IMR-90 (cell line): ENCODE measurements at regions of chr19 and their contacts with region 1.

Region 1: GRCh38 chr19:29367791-29368222 is 154.9 kb upstream of the UQCRFS1 start:
- DNase-seq: no peak
- ATAC-seq: no peak
- H3K4me3 ChIP-seq: no peak overlapping the region
- H3K27ac ChIP-seq: no peak overlapping the region
- H3K4me1 ChIP-seq: no peaks in the 10 kb centered on the region
- H3K27me3 ChIP-seq: no peaks in the 10 kb centered on the region
- CTCF ChIP-seq: no peak
- POLR2A ChIP-seq: no peak
- RAD21 ChIP-seq: no peak

Region 2: DNA sequence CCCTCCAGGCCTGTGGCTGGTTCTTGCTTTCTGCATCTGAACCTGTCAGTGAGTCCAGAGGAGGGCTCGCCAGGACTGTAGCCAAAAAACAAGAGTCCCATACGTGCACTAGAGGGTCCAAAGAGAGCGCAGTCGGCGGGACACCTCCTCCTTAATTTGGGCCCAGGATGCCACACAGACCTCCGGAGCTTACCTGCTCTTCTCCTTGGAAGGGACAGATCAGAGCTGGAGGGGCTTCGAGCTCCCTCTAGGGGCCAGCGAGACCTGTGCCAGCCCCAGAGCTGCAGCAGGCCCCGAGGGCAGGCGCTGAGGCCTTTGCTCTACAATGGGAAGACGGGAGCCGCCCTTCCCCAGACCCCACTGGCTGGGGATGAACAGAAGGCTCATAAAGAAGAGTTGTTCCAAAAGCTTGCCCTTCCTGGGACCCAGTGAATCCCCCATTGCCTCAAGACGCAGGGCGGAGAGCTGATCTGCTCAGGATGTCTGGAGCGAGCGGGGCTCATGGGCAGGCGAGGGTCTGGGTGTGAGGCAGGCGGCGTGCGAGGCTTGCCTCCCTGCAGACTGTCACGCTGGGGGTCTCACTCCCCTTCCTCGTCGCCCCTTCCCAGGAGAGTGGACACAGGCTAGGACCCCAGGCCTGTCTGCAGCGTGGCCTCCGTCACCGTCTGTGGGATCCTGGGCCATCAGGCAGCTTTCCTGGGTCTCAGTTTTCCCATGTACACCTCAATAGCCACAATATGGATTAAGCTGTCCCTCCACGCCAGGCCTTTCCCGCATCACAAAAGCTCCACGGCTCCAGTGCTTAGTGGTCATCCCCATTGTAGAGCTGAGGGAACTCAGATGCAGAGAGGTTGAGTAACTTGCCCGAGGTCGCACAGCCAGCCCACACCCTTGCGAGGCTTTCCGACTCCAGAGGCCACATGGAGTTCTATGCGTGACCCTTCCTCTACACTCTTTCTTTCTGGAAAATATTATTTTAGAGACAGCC is 111.1 kb after region 1 on chr19:
- CTCF ChIA-PET with region 1: no interaction called
- POLR2A ChIA-PET with region 1: no interaction called
- dilution Hi-C with region 1: no loop called
- in situ Hi-C with region 1: no loop called
- intact Hi-C with region 1: loop called (anchors 10 kb)
- DNase-seq: no peak
- ATAC-seq: no peak
- H3K4me3 ChIP-seq: no peak overlapping the region
- H3K27ac ChIP-seq: no peak overlapping the region
- H3K4me1 ChIP-seq: no peaks in the 10 kb centered on the region
- H3K27me3 ChIP-seq: no peaks in the 10 kb centered on the region
- CTCF ChIP-seq: peak; percentile 20; the same call in 1 of the 2 replicates
- POLR2A ChIP-seq: no peak
- RAD21 ChIP-seq: 0 out of 2 replicates have a peak, but pooled peaks have one; percentile 3